Ascending aorta (tissue), 2 donors: ENCODE measurements at regions of chr14 and their contacts with region 1.

Region 1: DNA sequence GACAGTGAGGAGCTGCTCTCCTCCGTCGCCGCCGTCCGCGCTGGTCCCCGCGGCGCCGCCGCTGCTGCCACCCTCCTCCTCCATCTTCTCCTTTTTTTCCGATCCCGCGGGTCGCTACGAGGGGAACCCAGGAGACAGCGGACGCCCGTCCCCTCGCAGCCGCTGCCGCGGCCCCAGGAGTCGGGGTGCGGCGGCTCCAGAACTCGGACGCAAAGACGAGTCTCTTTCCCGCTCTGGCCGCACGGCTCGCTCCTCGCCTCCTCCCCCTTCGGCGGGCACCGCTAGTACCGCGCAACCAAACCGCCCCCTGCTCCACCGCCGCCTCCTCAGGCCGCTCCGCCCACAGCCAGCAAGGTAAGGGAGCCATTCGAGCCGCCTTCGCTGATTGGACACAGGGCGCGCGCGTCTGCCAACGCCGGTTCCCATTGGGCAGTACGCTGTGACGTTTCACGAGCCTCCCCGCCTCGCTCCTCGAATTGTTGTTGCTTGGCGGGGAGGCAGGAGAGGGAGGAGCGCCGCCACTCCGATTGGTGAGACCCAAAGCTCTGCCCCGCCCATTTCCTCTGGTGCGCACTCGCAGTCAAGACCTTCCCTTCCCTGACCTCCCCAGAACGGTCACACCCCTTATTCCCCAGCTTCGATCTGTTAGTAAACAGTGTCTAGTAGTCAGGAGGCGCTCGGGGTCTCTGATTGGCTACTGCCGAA is at the start of gene RPS6KA5:
- DNase-seq: peak; percentile 100
- H3K4me3 ChIP-seq: peak within 1 kb of the TSS; percentile 91 to 98
- H3K27ac ChIP-seq: peak within 1 kb of the TSS; percentile 94 to 99
- H3K4me1 ChIP-seq: peaks cover 3 to 9% of the 10 kb centered on the region in 2 donors
- H3K27me3 ChIP-seq: no peaks in the 10 kb centered on the region
- CTCF ChIP-seq: peak in 2 of 3 experiments; percentile 16 to 59
- total RNA-seq, gene RPS6KA5: 0.21 TPM

Region 2: DNA sequence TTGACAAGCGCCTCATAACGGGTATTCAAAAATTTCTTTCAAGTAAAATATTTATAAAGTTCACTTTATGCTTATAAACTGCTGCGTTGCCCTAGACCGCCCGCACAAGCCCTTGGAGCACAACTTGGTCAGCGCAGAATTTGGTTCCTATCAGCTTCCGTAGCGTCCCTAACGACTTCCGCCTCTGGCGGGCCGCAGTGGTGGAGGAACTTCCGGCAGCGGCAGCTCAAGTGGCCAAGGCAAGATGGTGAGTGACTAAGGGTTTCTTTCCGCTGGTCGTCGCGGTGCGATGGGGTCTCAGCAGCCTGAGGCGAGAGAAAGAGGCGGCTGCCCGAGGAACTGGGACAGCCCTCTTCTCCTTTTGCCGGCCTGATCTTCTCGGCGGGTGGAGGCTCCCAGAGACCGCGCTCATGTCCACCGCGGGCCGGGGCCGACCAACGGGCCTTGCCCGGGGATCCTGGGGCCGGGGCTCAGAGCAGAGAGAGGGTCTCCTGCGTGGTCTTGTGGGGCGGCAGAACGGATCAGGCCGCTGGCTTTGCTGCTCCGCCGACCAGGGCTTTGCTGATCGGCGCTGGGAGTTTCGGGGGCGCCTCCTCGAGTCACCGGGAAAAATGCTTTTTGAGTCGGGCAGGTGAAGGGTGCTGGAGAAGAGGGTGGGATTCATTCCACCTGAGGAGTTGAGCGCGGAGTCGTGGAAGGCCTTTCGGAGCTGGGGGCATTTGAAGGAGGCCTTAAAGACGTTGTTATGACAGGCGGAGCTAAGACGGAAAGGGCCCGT is 804.0 kb before region 1 on chr14 and contains the start of gene PSMC1:
- intact Hi-C with region 1: loop called (anchors 10 kb)
- DNase-seq: peak; percentile 63 to 95
- H3K4me3 ChIP-seq: peak within 1 kb of the TSS; percentile 92 to 99
- H3K27ac ChIP-seq: peak within 1 kb of the TSS; percentile 90 to 93
- H3K4me1 ChIP-seq: peaks cover 0 to 4% of the 10 kb centered on the region in 2 donors
- H3K27me3 ChIP-seq: no peaks in the 10 kb centered on the region
- CTCF ChIP-seq: peak in 1 of 3 experiments; percentile 2
- total RNA-seq, gene PSMC1: 93.2 TPM

Region 3: GRCh38 chr14:90827916-90828610 is 232.4 kb before region 1 on chr14:
- intact Hi-C with region 1: loop called (anchors 2 kb)
- DNase-seq: peak; percentile 76 to 96
- H3K4me3 ChIP-seq: peak overlapping the region; percentile 35 to 66
- H3K27ac ChIP-seq: peak overlapping the region; percentile 58 to 82
- H3K4me1 ChIP-seq: peaks cover 4 to 5% of the 10 kb centered on the region in 2 donors
- H3K27me3 ChIP-seq: no peaks in the 10 kb centered on the region
- CTCF ChIP-seq: no peak

Region 4: GRCh38 chr14:91089958-91090535 is 29.5 kb after region 1 on chr14:
- intact Hi-C with region 1: no loop called
- DNase-seq: no peak
- H3K4me3 ChIP-seq: no peak overlapping the region
- H3K27ac ChIP-seq: no peak overlapping the region
- H3K4me1 ChIP-seq: no peaks in the 10 kb centered on the region
- H3K27me3 ChIP-seq: no peaks in the 10 kb centered on the region
- CTCF ChIP-seq: no peak

Region 5: GRCh38 chr14:91114079-91115065 is 53.9 kb after region 1 on chr14:
- intact Hi-C with region 1: loop called (anchors 2 kb)
- DNase-seq: peak; percentile 18 to 66
- H3K4me3 ChIP-seq: peak overlapping the region; percentile 73 to 81
- H3K27ac ChIP-seq: peak overlapping the region; percentile 79 to 84
- H3K4me1 ChIP-seq: peaks cover 12 to 25% of the 10 kb centered on the region in 2 donors
- H3K27me3 ChIP-seq: no peaks in the 10 kb centered on the region
- CTCF ChIP-seq: no peak

Region 6: DNA sequence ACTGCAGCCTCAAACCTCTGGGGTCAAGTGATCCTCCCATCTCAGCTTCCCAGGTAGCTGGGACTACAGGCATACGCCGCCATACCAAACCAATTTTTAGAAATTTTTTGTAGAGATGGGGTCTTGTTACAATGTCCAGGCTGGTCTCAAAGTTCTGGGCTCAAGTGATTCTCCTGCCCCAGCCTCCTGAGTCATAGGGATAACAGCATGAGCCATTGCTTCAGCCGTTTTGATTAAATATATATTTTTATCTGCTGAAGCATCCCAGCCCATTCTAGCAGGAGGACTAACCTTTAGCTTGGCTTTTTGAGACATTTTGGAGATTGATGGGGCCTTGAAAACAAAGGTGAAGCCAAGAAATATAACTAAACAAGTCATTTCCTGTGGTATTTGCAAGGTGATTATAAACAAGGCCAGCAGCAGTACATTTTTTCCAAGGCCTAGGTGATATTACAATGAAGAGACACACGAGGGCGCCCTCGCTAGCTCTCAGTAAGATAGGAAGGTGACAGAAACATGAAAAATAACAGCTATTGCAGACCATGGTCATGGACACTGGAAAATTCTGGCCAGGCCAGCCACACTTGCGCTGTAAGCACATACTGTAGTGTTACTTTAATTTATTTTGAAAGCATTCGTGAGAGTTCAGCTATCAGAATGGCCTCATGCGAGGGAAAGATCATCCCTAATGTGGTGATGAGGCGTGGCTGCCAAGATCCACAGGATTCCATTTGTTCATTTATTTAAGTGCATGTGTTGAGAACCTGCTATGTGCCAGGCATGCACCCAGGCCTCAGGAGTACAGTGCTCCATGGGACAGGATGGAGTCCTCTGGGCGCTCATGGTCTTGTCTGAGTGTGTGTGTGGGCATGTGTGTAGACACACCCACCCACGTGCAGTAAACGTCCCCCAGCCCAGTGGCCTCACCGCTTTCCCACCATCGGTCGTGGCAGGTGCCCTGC is 116.9 kb after region 1 on chr14:
- intact Hi-C with region 1: loop called (anchors 2 kb)
- DNase-seq: no peak
- H3K4me3 ChIP-seq: no peak overlapping the region
- H3K27ac ChIP-seq: no peak overlapping the region
- H3K4me1 ChIP-seq: no peaks in the 10 kb centered on the region
- H3K27me3 ChIP-seq: no peaks in the 10 kb centered on the region
- CTCF ChIP-seq: peak; percentile 40 to 73 (median 46)

Region 7: GRCh38 chr14:91934554-91935285 is 874.2 kb after region 1 on chr14:
- intact Hi-C with region 1: no loop called
- DNase-seq: no peak
- H3K4me3 ChIP-seq: no peak overlapping the region
- H3K27ac ChIP-seq: peak overlapping the region; percentile 60 to 91
- H3K4me1 ChIP-seq: peaks cover 24 to 67% of the 10 kb centered on the region in 2 donors
- H3K27me3 ChIP-seq: no peaks in the 10 kb centered on the region
- CTCF ChIP-seq: no peak